GM10248 (cell line): ENCODE measurements at regions of chr6 and their contacts with region 1.

Region 1: DNA sequence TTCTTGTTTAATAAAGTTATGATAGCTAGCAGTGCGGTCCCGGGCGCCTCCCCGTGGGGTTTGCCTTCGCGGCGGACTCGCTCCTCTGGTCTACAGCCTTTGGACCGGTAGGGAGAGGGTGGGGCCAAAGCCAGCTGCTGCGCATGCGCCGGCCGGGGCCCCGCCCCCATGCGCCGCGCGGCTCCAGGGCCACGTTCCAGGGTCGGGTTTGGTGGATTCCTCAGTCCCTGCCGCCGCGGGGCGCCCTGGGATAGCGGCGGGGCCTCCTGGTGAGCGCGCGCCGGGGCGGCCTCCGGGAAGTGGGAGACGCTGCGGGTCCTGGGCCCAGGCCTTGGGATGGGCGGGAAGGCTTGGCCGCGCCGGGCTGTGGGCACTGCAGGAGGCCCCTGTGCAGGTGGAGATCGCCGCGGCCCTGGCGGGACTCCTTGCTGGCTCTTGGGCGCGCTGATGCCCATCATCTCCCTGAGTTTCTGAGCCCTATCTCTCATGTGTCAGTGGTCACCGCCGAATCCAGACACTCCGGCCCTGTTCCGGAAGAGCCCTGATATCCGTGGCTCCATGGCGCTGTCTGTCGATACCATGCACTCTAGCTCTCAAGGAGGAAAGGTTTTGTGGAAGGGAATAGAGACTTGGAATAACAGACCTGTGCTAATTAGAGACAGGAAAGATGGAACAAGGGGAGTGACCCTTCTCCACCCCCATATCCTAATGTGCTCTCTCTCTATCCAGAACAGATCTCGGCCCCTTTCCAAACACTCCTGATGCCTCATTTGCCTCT is at the start of gene VARS2:
- DNase-seq: peak; percentile 99
- CTCF ChIP-seq: peak; percentile 17

Region 2: DNA sequence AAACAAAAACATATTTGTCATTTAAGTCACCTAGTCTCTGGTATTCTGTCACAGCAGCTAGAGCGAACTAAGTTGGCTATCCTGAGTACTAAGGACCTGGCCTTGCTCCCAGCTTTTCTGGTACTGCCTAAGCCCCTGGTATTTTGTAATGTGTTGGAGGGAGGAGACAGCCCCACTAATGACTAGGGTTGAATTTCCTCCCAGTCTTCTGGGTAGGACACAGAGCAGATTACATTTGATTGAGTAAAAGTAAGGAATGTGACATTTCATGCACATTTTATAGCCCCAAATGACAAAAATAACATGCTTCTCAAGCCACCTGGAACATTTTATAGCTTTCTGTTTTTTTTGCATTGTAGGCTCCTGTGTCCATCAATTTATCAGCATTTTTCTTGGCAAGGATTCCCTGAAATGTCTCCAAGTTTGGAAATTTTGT is 77.8 kb before region 1 on chr6:
- CTCF ChIA-PET with region 1: interaction called, 65 read pairs
- POLR2A ChIA-PET with region 1: no interaction called
- DNase-seq: no peak
- CTCF ChIP-seq: no peak

Region 3: GRCh38 chr6:30895341-30895740 is 18.9 kb before region 1 on chr6:
- CTCF ChIA-PET with region 1: interaction called, 21 read pairs
- POLR2A ChIA-PET with region 1: no interaction called
- DNase-seq: no peak
- CTCF ChIP-seq: no peak

Region 4: GRCh38 chr6:31042806-31043205 is 128.5 kb after region 1 on chr6:
- CTCF ChIA-PET with region 1: interaction called, 38 read pairs
- POLR2A ChIA-PET with region 1: no interaction called
- DNase-seq: peak; percentile 39
- CTCF ChIP-seq: peak; percentile 55

Region 5: DNA sequence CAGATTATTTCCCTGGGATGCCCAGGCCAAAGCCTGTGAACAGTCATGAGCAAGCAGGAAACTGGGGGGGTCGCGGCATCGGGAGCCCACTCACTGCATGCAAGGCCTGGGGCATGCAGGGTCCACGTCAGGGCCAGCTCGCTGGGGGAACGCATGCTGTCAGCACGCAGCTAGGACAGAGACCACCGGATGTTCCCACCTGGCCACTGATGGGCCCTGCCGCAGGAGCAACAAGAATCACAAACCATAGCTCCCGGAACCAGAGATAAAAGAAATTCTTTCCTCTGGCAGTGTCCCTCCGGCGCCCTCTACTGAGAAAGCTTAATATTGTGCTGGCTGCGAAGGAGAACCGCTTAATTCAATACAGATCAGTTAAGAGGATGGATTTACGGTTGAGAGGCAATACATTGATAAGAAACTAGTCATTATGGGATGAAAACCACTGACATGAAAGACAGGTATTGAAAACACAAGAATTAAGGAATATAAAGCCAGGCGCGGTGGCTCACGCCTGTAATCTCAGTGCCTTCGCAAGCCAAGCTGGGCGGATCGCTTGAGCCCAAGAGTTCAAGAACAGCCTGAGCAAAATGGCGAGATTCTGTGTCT is 165.5 kb after region 1 on chr6:
- CTCF ChIA-PET with region 1: interaction called, 115 read pairs
- POLR2A ChIA-PET with region 1: no interaction called
- DNase-seq: peak; percentile 69
- CTCF ChIP-seq: peak; percentile 78